ENCODE measurements at regions of chr21 and their contacts with region 1.

Region 1: GRCh38 chr21:36330904-36331303 is 10.9 kb downstream of the MORC3 start:
- DNase-seq: no peak
- ATAC-seq: peak in 3 of 4 donors; percentile 77 to 84 (median 83)
- H3K4me3 ChIP-seq: no peak overlapping the region
- H3K27ac ChIP-seq: no peak overlapping the region
- H3K4me1 ChIP-seq: peaks cover 0 to 63% (median 43%) of the 10 kb centered on the region in 12 donors
- H3K27me3 ChIP-seq: no peaks in the 10 kb centered on the region
- CTCF ChIP-seq: peak; percentile 55 to 76 (median 65)
- POLR2A ChIP-seq: no peak

Region 2: GRCh38 chr21:36125512-36126222 is 205.2 kb before region 1 on chr21:
- intact Hi-C with region 1: loop called in 2 of 10 experiments (anchors 5 to 10 kb)
- DNase-seq: peak in 2 of 5 donors; percentile 32 to 56
- ATAC-seq: peak in 1 of 4 donors; percentile 41
- H3K4me3 ChIP-seq: no peak overlapping the region
- H3K27ac ChIP-seq: peak overlapping the region in 2 of 12 donors; percentile 15 to 49
- H3K4me1 ChIP-seq: peaks cover 0 to 23% (median 8%) of the 10 kb centered on the region in 12 donors
- H3K27me3 ChIP-seq: no peaks in the 10 kb centered on the region
- CTCF ChIP-seq: peak; percentile 84 to 96 (median 92)
- POLR2A ChIP-seq: no peak

Region 3: GRCh38 chr21:36135391-36136102 is 195.4 kb before region 1 on chr21:
- intact Hi-C with region 1: loop called in 8 of 10 experiments (anchors 5 to 10 kb)
- DNase-seq: peak; percentile 74 to 91 (median 82)
- ATAC-seq: peak; percentile 78 to 91 (median 88)
- H3K4me3 ChIP-seq: peak overlapping the region; percentile 42 to 94 (median 70)
- H3K27ac ChIP-seq: peak overlapping the region; percentile 72 to 95 (median 92)
- H3K4me1 ChIP-seq: peaks cover 3 to 44% (median 16%) of the 10 kb centered on the region in 12 donors
- H3K27me3 ChIP-seq: peaks cover 0 to 10% (median 0%) of the 10 kb centered on the region in 9 donors
- CTCF ChIP-seq: no peak
- POLR2A ChIP-seq: peak in 1 of 2 donors; percentile 78

Region 4: DNA sequence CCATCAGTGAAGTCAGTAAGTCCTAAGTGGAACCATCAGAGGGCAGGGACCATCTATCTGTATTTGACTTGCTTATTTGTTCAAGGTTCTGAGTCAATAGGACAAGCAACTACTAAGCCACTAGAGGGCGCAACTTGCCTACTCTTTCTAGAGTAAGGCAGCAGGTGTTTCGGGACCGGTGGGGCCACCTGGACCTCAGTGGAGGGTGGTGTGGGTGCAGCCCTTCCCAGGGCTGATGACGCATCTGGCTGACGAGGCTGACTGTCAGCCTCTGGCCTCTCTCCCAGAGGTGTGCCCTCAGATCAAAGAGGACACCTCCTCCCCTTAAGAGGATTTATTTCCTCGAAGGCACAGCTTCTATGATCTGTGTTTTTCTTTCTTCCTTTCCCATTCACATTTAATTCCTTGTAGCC is 189.4 kb before region 1 on chr21:
- intact Hi-C with region 1: loop called in 9 of 10 experiments (anchors 2 to 10 kb)
- DNase-seq: peak in 4 of 5 donors; percentile 72 to 77 (median 76)
- ATAC-seq: peak; percentile 75 to 90 (median 83)
- H3K4me3 ChIP-seq: no peak overlapping the region
- H3K27ac ChIP-seq: no peak overlapping the region
- H3K4me1 ChIP-seq: peaks cover 0 to 13% (median 3%) of the 10 kb centered on the region in 12 donors
- H3K27me3 ChIP-seq: no peaks in the 10 kb centered on the region
- CTCF ChIP-seq: peak; percentile 70 to 89 (median 80)
- POLR2A ChIP-seq: no peak

Region 5: DNA sequence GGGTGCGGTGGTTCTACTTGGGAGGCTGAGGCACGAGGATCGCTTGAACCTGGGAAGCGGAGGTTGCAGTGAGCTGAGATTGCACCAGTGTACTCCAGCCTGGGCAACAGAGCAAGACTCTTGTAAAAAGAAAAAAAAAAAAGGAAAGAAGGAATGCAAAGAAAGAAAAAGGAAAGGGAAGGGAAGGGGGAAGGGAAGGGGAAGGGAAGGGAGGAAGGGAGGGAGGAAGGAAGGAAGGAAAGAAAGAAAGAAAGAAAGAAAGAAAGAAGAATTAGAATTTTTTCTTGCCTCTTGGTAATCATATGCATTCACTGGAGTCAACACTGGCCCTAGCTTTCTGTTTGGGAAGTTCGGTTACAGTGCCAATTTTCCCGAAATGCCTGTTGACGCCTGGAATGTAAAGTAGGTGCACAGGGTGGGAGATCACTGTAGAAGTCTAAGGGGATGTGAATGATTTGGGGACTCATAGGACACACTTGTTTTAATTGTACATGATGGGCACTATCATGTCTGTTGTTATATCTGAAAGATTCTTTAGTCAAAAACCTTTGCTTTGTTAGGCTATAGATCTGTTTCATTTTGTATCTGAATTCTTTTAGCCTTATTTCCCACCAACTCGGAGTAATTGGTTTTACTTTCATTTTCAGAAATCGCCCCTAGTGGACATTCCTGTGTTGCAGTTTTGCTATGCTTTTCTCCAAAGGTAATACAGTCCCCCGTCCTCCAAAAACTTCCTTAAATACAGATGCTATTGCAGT is 70.7 kb before region 1 on chr21:
- intact Hi-C with region 1: loop called in 1 of 10 experiments (anchors 5 kb)
- DNase-seq: peak in 1 of 5 donors; percentile 34
- ATAC-seq: peak; percentile 55 to 82 (median 66)
- H3K4me3 ChIP-seq: peak overlapping the region; percentile 19 to 74 (median 52)
- H3K27ac ChIP-seq: peak overlapping the region; percentile 43 to 89 (median 76)
- H3K4me1 ChIP-seq: peaks cover 0 to 8% (median 0%) of the 10 kb centered on the region in 12 donors
- H3K27me3 ChIP-seq: no peaks in the 10 kb centered on the region
- CTCF ChIP-seq: peak; percentile 65 to 85 (median 76)
- POLR2A ChIP-seq: no peak